ENCODE measurements at regions of chr11 and their contacts with region 1.

Region 1: DNA sequence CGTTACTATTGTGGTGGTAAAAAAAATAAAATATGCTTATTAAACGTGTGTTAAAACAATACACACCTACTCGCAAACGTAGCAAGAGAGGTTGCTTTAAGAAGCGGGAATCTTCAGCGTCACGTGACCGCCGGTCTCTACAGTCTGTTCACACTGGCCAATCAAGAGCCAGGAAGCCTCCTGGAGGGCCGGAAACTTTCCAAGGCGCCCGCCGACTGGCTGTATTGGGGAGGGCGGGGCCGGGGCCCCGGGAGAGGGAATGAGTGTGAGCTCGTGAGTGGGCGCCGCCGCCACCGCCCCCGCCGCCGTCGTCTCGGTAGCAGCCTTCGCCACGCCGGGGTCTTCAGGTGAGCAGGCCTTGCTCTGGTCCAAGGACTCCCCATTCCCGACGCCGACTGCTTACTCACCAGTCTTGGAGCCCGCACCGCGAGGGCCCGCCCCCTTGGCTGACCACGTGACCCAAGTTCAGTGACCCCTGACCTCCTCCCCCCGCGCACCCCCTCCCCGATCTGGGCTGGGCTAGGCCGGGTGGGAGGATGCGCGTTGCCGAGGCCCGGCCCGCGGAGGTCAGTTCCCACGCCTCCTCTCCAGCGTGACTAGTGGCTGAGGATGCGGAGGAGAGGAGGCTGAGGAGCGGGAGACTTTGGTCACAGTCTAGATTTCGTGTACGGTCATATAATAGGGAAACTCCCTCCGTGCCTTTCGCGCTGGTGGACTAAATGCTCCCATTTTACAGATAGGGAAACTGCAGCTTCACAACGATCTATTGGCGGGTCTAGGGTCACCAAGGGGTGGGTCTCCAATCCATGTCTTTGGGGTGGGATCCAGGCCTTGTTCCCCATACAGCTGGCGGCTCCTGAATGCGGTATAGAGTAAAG is at the start of gene TAF6L:
- DNase-seq: peak; percentile 81
- ATAC-seq: peak; percentile 88
- H3K4me3 Mint-ChIP-seq: peak within 1 kb of the TSS; percentile 92
- H3K27ac Mint-ChIP-seq: peak within 1 kb of the TSS; percentile 94
- H3K4me1 Mint-ChIP-seq: peaks cover 28% of the 10 kb centered on the region
- H3K27me3 Mint-ChIP-seq: no peaks in the 10 kb centered on the region
- CTCF ChIP-seq: no peak
- total RNA-seq, gene TAF6L: 32.9 and 38.6 TPM in 2 replicates

Region 2: DNA sequence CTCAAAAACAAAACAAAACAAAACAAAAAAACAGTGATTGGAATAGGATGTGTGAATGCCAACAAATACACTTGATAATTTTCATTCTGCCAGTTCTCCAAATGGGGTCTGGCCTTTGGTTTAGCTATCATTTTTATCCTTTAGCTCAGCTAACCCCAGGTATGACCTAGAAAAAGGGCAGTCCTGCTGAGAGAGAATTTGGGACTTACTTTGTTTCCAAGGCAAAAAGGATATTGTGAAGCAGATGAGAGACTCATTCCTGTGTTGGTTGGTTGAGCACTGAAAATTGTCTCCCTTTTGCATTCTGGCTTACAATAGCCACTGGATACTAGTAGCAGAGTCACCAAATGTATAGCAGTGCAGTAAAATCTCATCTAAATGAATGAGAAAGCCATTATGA is 34.2 kb before region 1 on chr11:
- CTCF ChIA-PET with region 1: no interaction called
- POLR2A ChIA-PET with region 1: interaction called, 13 read pairs
- intact Hi-C with region 1: no loop called
- DNase-seq: no peak
- ATAC-seq: no peak
- H3K4me3 Mint-ChIP-seq: no peak overlapping the region
- H3K27ac Mint-ChIP-seq: no peak overlapping the region
- H3K4me1 Mint-ChIP-seq: peaks cover 9% of the 10 kb centered on the region
- H3K27me3 Mint-ChIP-seq: no peaks in the 10 kb centered on the region
- CTCF ChIP-seq: no peak

Measured in activated B cell treated with CpG ODN at 0.5 μM for 24 hours (primary cell).